ENCODE measurements at regions of chr14 and their contacts with region 1.

Region 1: GRCh38 chr14:93984987-93985410 is 8.6 kb upstream of the ASB2 start:
- DNase-seq: peak; percentile 85
- H3K4me3 ChIP-seq: no peak overlapping the region
- H3K27ac ChIP-seq: peak overlapping the region; percentile 47
- H3K27me3 ChIP-seq: no peaks in the 10 kb centered on the region
- CTCF ChIP-seq: peak; percentile 47

Region 2: GRCh38 chr14:93914278-93914677 is 70.7 kb before region 1 on chr14:
- CTCF ChIA-PET with region 1: no interaction called
- POLR2A ChIA-PET with region 1: no interaction called
- DNase-seq: no peak
- H3K4me3 ChIP-seq: no peak overlapping the region
- H3K27ac ChIP-seq: no peak overlapping the region
- H3K27me3 ChIP-seq: no peaks in the 10 kb centered on the region
- CTCF ChIP-seq: no peak

Region 3: GRCh38 chr14:93965287-93965851 is 19.6 kb before region 1 on chr14:
- CTCF ChIA-PET with region 1: interaction called, 3 read pairs
- POLR2A ChIA-PET with region 1: interaction called, 10 read pairs
- DNase-seq: peak; percentile 85
- H3K4me3 ChIP-seq: no peak overlapping the region
- H3K27ac ChIP-seq: peak overlapping the region; percentile 93
- H3K27me3 ChIP-seq: no peaks in the 10 kb centered on the region
- CTCF ChIP-seq: no peak

Region 4: GRCh38 chr14:94001501-94002396 is 16.8 kb after region 1 on chr14:
- CTCF ChIA-PET with region 1: interaction called, 20 read pairs
- POLR2A ChIA-PET with region 1: no interaction called
- DNase-seq: peak; percentile 41
- H3K4me3 ChIP-seq: no peak overlapping the region
- H3K27ac ChIP-seq: no peak overlapping the region
- H3K27me3 ChIP-seq: peaks cover 17% of the 10 kb centered on the region
- CTCF ChIP-seq: peak; percentile 97